ENCODE measurements at regions of chr7 and their contacts with region 1.

Region 1: DNA sequence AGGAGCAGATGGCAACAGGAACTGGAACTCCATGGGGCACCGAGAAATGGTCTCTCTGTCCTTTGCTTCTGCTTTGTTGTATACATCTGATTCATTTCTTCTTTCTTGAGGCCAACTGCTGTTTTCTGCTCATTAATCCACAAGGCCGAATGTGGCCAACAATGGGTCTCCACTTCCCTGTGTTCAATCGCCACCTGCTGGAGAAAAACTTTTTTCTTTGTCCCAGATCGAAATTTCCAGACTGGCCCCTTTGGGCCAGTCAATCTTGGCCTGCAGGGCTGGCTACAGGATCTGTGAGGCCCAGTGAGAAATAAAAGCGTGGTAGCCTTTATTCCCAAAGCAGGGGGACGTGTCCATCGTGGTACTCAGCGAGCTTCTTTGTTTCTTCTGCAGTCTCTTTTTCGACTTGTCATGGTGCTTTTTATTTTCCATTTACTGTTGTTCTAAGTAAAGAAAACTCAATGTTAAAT is 58.8 kb downstream of the PARP12 start:
- DNase-seq: peak; percentile 47
- ATAC-seq: peak; percentile 46
- H3K4me3 ChIP-seq: no peak overlapping the region
- H3K27ac ChIP-seq: no peak overlapping the region
- H3K4me1 ChIP-seq: peaks cover 0 to 13% of the 10 kb centered on the region in 2 experiments; a peak in 2 of 4 replicates
- H3K27me3 ChIP-seq: no peaks in the 10 kb centered on the region
- CTCF ChIP-seq: peak; percentile 55 to 82 (median 73); a peak in 5 of 6 replicates
- POLR2A ChIP-seq: no peak
- RAD21 ChIP-seq: peak; percentile 87

Region 2: GRCh38 chr7:139505563-139505962 is 498.4 kb before region 1 on chr7:
- CTCF ChIA-PET with region 1: interaction called, 19 read pairs
- POLR2A ChIA-PET with region 1: no interaction called
- RAD21 ChIA-PET with region 1: no interaction called
- intact Hi-C with region 1: loop called (anchors 1 kb)
- DNase-seq: peak; percentile 15
- ATAC-seq: peak; percentile 91
- H3K4me3 ChIP-seq: no peak overlapping the region
- H3K27ac ChIP-seq: no peak overlapping the region
- H3K4me1 ChIP-seq: peaks cover 0 to 3% of the 10 kb centered on the region in 2 experiments; a peak in 2 of 4 replicates
- H3K27me3 ChIP-seq: no peaks in the 10 kb centered on the region
- CTCF ChIP-seq: peak; percentile 48 to 71 (median 66); a peak in 5 of 6 replicates
- POLR2A ChIP-seq: no peak
- RAD21 ChIP-seq: peak; percentile 59

Region 3: DNA sequence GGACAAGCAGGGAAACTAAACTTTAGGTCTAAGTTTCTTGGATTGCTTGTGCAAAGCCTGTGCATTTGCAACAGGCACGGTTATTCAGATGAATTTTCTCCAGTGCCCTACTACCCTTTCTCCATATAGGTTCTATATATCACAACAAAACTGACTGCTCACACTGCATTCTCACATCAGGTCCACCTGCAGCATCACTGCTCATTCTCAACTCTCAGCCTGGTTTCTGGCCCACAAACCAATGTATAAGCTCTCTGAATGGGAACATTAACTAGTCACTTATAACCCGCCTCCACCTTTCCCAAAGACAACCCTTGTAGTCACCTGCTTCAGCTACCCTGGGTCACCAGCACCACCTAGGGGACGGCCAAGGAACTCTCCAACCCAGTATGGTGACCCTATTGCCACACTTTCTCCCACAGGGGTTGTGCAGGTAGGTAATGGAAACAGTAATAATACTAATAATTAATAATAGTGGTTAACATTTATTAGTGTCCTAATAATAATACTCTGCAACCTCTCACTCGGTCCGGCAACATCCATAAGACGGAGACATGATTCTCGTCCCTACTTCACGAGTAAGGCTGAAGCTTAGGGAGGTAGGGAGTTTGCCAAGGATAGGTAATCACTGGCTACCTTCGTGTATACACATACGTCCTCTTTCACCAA is 383.1 kb before region 1 on chr7:
- CTCF ChIA-PET with region 1: interaction called, 19 read pairs
- POLR2A ChIA-PET with region 1: interaction called, 3 read pairs
- RAD21 ChIA-PET with region 1: interaction called, 4 to 6 read pairs
- intact Hi-C with region 1: loop called (anchors 1 kb)
- DNase-seq: peak; percentile 26
- ATAC-seq: peak; percentile 91
- H3K4me3 ChIP-seq: no peak overlapping the region
- H3K27ac ChIP-seq: no peak overlapping the region
- H3K4me1 ChIP-seq: 0 out of 4 replicates have a peak, but pooled peaks cover 0 to 4% of the 10 kb centered on the region in 2 experiments
- H3K27me3 ChIP-seq: no peaks in the 10 kb centered on the region
- CTCF ChIP-seq: peak; percentile 56 to 89 (median 80); a peak in 5 of 6 replicates
- POLR2A ChIP-seq: no peak
- RAD21 ChIP-seq: peak; percentile 70

Region 4: GRCh38 chr7:139777948-139778841 is 225.8 kb before region 1 on chr7 and contains the start of gene HIPK2:
- CTCF ChIA-PET with region 1: no interaction called
- POLR2A ChIA-PET with region 1: no interaction called
- RAD21 ChIA-PET with region 1: no interaction called
- intact Hi-C with region 1: loop called (anchors 1 kb)
- DNase-seq: no peak
- ATAC-seq: peak; percentile 75
- H3K4me3 ChIP-seq: peak within 1 kb of the TSS; percentile 75 to 86
- H3K27ac ChIP-seq: peak within 1 kb of the TSS; percentile 69
- H3K4me1 ChIP-seq: peaks cover 20 to 39% of the 10 kb centered on the region in 2 experiments
- H3K27me3 ChIP-seq: peaks cover 4% of the 10 kb centered on the region; the same call in 1 of the 2 replicates
- CTCF ChIP-seq: no peak
- POLR2A ChIP-seq: no peak
- RAD21 ChIP-seq: no peak
- total RNA-seq, gene HIPK2: 49.5 TPM